AG04449 (cell line): ENCODE measurements at regions of chr15 and their contacts with region 1.

Region 1: DNA sequence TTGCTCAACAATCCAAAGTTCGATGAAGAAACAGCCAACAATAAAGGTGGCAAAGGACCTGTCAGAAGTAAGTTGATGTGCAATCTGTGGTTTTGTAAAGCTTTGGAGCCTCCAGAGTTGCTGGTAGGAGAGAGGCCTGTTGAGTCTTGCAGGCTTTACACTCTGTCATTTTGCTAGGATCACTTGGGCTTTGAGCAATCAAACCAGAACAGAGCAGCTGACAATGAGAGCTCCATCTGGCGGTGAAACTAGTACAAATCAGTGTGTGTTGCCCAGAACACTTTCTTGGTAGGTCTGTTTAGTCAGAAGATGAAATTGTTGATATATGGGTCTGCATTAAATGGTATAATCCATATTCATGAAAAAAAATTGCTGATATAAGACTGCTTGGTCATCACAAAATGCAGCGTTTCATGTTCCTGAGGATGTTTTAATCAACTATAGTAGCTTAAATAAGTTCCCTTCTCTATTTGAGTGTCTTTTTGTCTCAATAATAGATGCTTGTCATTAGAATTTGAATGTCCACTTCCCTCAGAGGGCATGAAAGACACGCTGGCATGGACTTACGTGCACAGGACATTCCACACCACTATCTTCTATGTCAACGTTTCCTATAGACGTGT is 25.7 kb downstream of the TMOD2 start:
- DNase-seq: peak; percentile 21
- H3K4me3 ChIP-seq: no peak overlapping the region
- CTCF ChIP-seq: peak; percentile 82

Region 2: DNA sequence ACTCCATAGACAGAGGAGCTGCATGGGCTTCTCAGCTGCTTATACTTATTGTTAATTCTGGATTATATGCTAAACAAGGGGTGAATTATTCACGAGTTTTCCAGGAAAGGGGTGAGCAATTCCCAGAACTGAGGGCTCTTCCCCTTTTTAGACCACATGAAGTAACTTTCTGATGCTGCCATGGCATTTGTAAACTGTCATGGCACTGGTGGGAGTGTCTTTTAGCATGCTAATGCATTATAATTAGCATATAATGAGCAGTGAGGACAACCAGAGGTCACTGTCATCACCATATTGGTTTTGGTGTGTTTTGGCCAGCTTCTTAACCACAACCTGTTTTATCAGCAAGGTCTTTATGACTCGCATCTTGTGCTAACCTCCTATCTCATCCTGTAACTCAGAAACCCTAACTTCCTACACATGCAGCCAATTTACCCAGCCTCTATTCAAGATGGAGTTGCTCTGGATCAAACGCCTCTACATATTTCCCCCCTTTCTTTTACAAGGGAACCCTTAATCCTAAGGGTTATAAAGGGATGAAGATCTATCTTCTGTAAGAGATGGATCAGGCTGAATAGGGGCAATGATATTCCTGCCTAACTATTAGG is 142.4 kb before region 1 on chr15:
- CTCF ChIA-PET with region 1: interaction called, 11 read pairs
- POLR2A ChIA-PET with region 1: no interaction called
- DNase-seq: no peak
- H3K4me3 ChIP-seq: no peak overlapping the region
- CTCF ChIP-seq: no peak

Region 3: GRCh38 chr15:51658670-51659069 is 118.4 kb before region 1 on chr15:
- CTCF ChIA-PET with region 1: interaction called, 105 read pairs
- POLR2A ChIA-PET with region 1: no interaction called
- DNase-seq: no peak
- H3K4me3 ChIP-seq: no peak overlapping the region
- CTCF ChIP-seq: no peak

Region 4: GRCh38 chr15:51688863-51689262 is 88.2 kb before region 1 on chr15:
- CTCF ChIA-PET with region 1: interaction called, 20 read pairs
- POLR2A ChIA-PET with region 1: no interaction called
- DNase-seq: no peak
- H3K4me3 ChIP-seq: no peak overlapping the region
- CTCF ChIP-seq: peak; percentile 23

Region 5: GRCh38 chr15:51718219-51718618 is 58.8 kb before region 1 on chr15:
- CTCF ChIA-PET with region 1: interaction called, 10 read pairs
- POLR2A ChIA-PET with region 1: no interaction called
- DNase-seq: no peak
- H3K4me3 ChIP-seq: no peak overlapping the region
- CTCF ChIP-seq: no peak

Region 6: GRCh38 chr15:51737280-51738017 is 39.6 kb before region 1 on chr15 and contains the start of gene LYSMD2:
- CTCF ChIA-PET with region 1: interaction called, 21 read pairs
- POLR2A ChIA-PET with region 1: no interaction called
- DNase-seq: no peak
- H3K4me3 ChIP-seq: peak within 1 kb of the TSS; percentile 66
- CTCF ChIP-seq: no peak

Region 7: GRCh38 chr15:51793521-51794305 is 16.6 kb after region 1 on chr15:
- CTCF ChIA-PET with region 1: interaction called, 36 read pairs
- POLR2A ChIA-PET with region 1: no interaction called
- DNase-seq: no peak
- H3K4me3 ChIP-seq: no peak overlapping the region
- CTCF ChIP-seq: no peak